Ovary (tissue), 10 donors: ENCODE measurements at regions of chr11 and their contacts with region 1.

Region 1: DNA sequence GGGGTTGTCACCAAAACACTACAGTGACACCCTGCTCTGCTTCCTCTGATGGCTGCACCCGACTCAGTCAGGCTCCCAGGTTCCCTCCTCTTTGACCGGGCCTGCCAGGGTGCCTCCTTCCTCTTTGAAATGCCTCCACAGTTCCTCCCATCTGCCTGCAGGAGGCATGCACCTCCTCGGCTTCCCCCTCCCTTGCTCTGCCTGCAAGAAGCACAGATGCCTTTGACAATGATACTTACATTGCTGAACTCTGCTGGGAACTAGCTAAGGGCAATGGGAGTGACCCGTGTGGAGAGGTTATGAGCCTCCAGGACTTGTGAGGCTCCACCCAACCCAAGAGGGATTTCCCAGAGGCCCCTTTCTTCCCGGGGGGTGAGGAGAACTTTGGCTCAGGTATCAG is 674.1 kb downstream of the OPCML start:
- DNase-seq: no peak
- H3K4me3 ChIP-seq: no peak overlapping the region
- H3K27ac ChIP-seq: no peak overlapping the region
- H3K4me1 ChIP-seq: no peaks in the 10 kb centered on the region
- H3K27me3 ChIP-seq: no peaks in the 10 kb centered on the region
- CTCF ChIP-seq: no peak
- EP300 ChIP-seq: no peak
- POLR2A ChIP-seq: no peak

Region 2: DNA sequence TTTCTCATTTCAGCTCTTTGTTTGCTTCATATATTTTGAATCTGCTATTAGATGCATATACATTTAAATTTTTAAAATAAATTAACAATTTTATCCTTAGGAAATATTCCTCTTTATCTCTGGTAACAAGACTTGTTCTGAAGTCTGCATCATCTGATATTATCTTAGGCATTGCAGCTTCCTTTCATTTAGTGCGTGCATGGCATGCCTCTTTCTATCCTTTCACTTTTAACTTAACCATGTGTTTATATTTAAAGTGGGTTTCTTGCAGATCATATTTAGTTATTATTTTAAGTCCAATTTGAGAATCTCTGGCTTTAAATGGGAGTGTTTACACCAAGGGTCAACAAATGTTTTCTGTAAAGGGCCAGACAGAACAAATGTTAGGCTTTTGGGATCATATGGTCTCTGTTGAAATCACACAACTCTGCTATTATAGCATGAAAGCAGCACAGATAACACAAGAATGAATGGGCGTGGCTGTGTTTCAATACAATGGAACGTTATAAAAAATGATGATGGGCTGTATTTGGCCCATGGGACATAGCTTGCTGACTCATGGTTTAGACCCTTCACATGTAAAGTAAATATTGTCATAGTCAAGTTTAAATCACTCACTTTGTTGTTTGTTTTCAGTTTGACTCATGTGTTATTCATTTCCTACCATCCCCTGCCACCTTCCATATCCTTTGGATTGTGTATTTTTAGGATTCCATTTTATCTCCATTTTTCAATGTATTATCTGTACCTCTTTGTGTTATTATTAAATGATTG is 1858.0 kb before region 1 on chr11:
- intact Hi-C with region 1: loop called in 1 of 4 experiments (anchors 10 kb)
- DNase-seq: no peak
- H3K4me3 ChIP-seq: no peak overlapping the region
- H3K27ac ChIP-seq: no peak overlapping the region
- H3K4me1 ChIP-seq: no peaks in the 10 kb centered on the region
- H3K27me3 ChIP-seq: no peaks in the 10 kb centered on the region
- CTCF ChIP-seq: no peak
- EP300 ChIP-seq: no peak
- POLR2A ChIP-seq: no peak

Region 3: DNA sequence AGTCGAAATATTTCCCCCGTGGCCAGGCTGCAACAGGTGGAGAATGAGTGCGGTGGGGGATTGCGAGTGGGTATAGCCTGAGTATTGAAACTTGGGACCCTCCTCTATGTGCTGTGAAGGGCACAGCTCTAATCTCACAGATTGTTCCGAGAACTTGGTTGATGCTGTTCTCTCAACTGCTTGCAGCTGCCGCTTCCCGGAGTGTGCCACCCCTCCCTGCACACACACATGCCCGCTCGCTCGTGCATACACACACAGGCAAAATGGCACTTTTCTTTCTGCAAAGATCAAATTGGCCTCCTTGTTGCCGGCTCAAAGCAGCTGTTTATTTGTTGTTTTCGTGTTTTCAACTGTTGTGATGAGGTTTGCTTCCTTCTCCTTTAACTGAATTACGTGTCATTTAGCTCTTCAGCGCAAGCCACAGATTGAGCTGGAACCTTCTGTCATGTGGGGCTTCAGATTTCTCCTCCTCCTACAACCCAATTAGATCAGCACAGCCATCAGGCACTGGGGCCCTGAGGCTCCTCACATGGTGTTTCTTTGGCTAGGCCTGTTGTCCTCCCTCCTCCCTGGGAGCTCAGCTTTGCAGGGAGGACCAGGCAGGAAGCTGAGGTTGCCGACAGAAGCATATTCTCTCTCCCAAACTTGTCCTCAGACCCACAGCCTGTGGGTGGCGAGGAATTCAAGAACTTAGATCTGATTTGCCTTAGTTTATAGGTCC is 1567.8 kb after region 1 on chr11:
- intact Hi-C with region 1: loop called in 1 of 4 experiments (anchors 10 kb)
- DNase-seq: no peak
- H3K4me3 ChIP-seq: no peak overlapping the region
- H3K27ac ChIP-seq: no peak overlapping the region
- H3K4me1 ChIP-seq: no peaks in the 10 kb centered on the region
- H3K27me3 ChIP-seq: no peaks in the 10 kb centered on the region
- CTCF ChIP-seq: no peak
- EP300 ChIP-seq: no peak
- POLR2A ChIP-seq: no peak